Activated CD4-positive, alpha-beta T cell treated with anti-CD3 and anti-CD28 coated beads for 36 hours (primary cell): ENCODE measurements at regions of chr9 and their contacts with region 1.

Region 1: DNA sequence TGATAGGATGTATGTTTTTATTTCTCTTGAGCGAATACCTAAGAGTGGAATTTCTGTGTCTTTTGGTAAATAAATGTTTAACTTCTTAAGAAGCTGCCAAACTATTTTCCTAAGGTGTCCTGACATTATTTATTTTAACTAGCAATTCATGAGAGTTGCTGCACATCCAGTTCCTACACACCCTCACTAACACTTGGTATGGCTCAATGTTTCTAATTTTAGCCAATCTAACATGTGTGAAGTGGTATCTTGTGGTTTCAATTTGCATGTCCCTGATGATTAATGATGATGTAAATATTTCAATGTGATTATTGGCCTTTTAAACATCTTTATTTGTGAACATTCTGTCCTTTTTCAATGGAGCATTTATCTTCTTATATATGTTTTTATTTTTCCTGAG is 2095.5 kb upstream of the C9orf72 start:
- DNase-seq: no peak
- ATAC-seq: no peak
- H3K4me3 Mint-ChIP-seq: no peak overlapping the region
- H3K27ac Mint-ChIP-seq: no peak overlapping the region
- H3K4me1 Mint-ChIP-seq: no peaks in the 10 kb centered on the region
- H3K27me3 Mint-ChIP-seq: no peaks in the 10 kb centered on the region

Region 2: GRCh38 chr9:29637448-29638237 is 31.1 kb before region 1 on chr9:
- CTCF ChIA-PET with region 1: no interaction called
- POLR2A ChIA-PET with region 1: no interaction called
- intact Hi-C with region 1: loop called in 1 of 2 experiments (anchors 1 kb)
- DNase-seq: no peak
- ATAC-seq: no peak
- H3K4me3 Mint-ChIP-seq: no peak overlapping the region
- H3K27ac Mint-ChIP-seq: no peak overlapping the region
- H3K4me1 Mint-ChIP-seq: no peaks in the 10 kb centered on the region
- H3K27me3 Mint-ChIP-seq: no peaks in the 10 kb centered on the region